ENCODE measurements at regions of chr12 and their contacts with region 1.

Region 1: GRCh38 chr12:1690578-1691122 is at the start of gene ADIPOR2:
- DNase-seq: peak; percentile 98
- H3K4me3 Mint-ChIP-seq: peak within 1 kb of the TSS; percentile 88
- H3K27ac Mint-ChIP-seq: peak within 1 kb of the TSS; percentile 99
- H3K4me1 Mint-ChIP-seq: peaks cover 28% of the 10 kb centered on the region
- H3K27me3 Mint-ChIP-seq: peaks cover 8% of the 10 kb centered on the region
- total RNA-seq, gene ADIPOR2: 68.7 and 71.2 TPM in 2 replicates

Region 2: DNA sequence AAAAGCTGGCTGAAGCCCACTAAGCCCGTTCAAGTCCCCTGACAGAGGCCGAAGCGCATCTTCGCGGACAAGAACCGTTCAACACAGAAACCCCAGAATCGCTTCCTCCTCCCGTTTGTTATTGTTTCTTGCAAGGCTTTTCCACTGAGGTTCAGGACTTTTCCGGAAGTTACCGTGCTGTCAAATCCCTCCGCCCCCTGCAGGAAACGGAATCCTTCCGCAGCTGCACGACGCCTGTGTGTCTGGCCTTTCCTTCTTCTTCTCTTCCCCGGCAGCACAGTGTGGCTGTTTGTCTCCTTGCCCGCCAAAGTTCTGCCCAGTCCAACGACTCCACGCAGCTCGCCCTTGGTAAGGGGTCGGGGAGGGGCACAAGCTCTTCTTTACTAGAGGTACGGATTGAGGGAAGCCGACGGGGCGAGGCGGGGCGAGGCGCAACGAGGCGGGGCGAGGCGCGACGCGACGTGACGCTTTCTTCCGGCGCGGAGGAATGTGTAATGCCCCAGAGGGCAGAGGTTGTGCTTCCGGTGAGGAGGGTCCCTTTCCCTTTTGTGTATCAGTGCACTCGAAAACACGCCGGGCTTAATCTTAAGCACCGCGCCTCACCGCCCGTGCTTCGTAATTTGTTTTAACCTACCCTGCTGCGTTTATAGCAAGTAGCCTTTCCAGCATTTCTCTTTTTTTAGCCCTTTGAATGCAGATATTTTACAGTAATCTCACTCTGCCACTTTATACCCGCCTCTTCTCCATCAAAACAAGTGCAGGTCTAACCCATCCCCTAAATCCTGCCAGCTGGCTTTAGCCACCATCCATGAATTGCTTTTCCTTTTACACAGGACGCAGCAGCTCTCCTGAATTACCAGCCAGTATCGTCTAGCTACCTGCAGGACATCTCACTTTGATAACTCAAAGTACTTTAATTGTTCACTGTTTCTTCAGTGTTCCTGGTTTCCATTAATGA is 1301.2 kb before region 1 on chr12 and contains the start of gene KDM5A:
- intact Hi-C with region 1: loop called (anchors 5 kb)
- DNase-seq: peak; percentile 96
- H3K4me3 Mint-ChIP-seq: peak within 1 kb of the TSS; percentile 94
- H3K27ac Mint-ChIP-seq: peak within 1 kb of the TSS; percentile 98
- H3K4me1 Mint-ChIP-seq: peaks cover 24% of the 10 kb centered on the region
- H3K27me3 Mint-ChIP-seq: no peaks in the 10 kb centered on the region
- total RNA-seq, gene KDM5A: 79.0 and 82.7 TPM in 2 replicates

Region 3: DNA sequence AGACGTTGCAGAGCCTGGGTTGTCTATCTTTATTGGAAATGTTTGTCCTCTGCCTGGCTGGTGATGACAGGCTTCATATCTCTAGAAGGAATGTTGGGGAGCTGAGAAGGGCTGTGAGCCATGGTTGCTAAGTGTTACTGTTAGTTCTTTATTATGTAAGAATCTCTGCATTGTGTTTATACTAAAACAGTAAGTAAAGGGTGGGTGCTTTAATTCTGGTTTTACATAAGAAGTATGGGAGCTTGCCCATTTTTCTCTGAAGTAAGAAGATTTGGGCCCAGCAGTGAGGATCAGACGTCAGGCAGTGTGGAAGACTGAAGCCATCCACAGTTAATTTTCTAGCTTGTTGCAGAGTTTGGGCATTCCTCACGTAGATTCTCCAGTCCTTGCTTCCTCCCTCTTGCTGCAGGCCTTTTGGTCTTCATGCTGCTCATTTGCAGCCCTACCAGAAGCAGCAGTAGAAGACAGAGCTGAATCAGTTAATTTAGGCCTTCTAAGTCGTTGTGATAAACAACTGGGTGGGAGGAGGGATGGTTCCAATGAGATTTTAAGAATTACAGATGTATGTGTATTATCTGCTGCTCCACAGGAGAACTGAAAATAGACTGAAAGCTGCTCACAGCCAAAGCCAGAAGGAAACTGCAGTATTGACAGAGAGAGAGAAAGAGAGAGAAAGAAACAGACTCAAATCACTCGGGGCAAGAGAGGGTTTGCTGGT is 40.2 kb before region 1 on chr12:
- intact Hi-C with region 1: loop called (anchors 5 kb)
- DNase-seq: no peak
- H3K4me3 Mint-ChIP-seq: no peak overlapping the region
- H3K27ac Mint-ChIP-seq: no peak overlapping the region
- H3K4me1 Mint-ChIP-seq: peaks cover 5% of the 10 kb centered on the region
- H3K27me3 Mint-ChIP-seq: peaks cover 40% of the 10 kb centered on the region

Region 4: GRCh38 chr12:1661553-1662335 is 28.9 kb before region 1 on chr12:
- intact Hi-C with region 1: loop called (anchors 1 kb)
- DNase-seq: peak; percentile 95
- H3K4me3 Mint-ChIP-seq: peak overlapping the region; percentile 89
- H3K27ac Mint-ChIP-seq: peak overlapping the region; percentile 83
- H3K4me1 Mint-ChIP-seq: peaks cover 26% of the 10 kb centered on the region
- H3K27me3 Mint-ChIP-seq: peaks cover 3% of the 10 kb centered on the region

Region 5: DNA sequence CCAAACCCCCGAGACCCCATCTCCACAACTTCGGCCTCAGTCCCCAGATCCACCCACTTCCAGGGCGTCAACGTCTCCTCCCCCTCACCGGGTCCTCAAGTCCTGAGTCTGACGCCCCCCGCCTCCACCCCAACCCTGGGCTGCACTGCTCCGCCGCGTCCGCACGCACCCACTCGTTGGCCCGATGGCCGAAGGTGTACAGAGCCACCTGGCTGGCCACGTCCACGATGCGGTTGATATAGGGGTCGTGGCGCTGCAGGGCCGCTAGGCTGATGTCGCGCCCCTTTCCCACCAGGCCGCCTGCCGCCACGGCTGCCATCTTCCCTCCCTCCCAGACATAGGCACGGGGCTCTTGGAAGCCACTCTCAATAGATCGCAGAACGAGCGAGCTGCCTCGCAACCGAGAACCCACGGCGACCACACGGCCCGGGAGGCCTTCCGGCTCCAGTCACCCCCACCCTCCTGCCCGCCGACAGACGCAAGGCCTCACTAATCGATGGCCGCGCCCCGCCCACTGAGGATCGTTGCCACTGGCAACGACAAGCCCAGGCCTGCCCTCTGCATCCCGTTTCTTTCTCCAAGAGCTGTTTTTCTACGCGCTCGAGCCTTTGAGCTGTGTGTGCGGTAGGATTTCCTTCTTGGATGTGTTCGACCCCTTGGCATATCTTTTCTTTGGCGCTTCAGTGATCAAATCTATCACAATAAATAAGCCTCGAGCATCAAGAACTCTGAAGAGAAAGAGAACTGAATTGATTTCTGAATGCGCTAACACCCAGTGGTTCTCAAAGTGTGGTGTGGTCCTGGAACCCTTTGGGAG is 313.7 kb after region 1 on chr12 and contains the start of gene DCP1B:
- intact Hi-C with region 1: loop called (anchors 1 kb)
- DNase-seq: peak; percentile 98
- H3K4me3 Mint-ChIP-seq: peak within 1 kb of the TSS; percentile 98
- H3K27ac Mint-ChIP-seq: peak within 1 kb of the TSS; percentile 98
- H3K4me1 Mint-ChIP-seq: peaks cover 22% of the 10 kb centered on the region
- H3K27me3 Mint-ChIP-seq: peaks cover 14% of the 10 kb centered on the region
- total RNA-seq, gene DCP1B: 9.9 and 10.4 TPM in 2 replicates